Gastrocnemius medialis (tissue), 4 donors: ENCODE measurements at regions of chr5 and their contacts with region 1.

Region 1: DNA sequence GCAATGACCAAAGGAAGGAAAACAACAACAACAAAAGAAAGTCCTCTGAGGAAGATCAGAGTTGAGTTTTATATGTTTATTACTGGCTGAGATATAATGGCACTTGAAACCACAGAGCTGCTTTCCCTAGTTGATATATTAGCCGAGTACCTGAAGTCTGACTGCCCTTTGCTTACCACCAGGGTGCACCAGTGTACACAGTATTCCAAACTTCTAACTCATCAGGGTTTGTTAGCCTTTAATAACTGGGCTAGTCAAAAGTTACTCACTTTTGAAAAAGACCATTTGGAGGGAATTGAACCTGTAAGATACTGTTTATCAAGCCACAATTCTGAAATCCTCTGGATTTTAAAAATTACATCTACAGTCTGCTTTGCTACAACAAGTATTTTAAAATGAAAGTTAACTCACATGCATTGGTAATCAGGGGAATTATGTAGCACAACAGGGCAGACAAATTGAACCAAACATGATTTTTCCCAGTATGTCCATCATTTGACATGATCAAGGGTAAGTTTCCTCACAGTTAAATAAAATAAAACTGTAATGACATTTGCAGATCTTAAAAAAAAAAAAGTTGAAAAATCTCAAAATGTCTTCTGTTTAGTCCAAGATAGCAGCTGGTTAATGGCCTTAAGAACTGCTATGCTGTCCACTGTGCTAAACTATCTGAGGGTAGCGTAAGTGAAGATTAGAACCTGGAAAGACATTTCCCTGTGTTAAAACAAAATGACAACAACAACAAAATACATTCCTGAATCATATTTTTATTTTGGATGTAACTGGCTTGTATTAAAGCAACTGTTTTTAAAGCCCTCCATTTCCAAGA is 57.3 kb upstream of the C6 start:
- DNase-seq: no peak
- ATAC-seq: peak; percentile 62 to 72
- H3K4me3 ChIP-seq: no peak overlapping the region
- H3K27ac ChIP-seq: no peak overlapping the region
- H3K4me1 ChIP-seq: no peaks in the 10 kb centered on the region
- H3K27me3 ChIP-seq: no peaks in the 10 kb centered on the region
- CTCF ChIP-seq: peak; percentile 27 to 59 (median 43)
- POLR2A ChIP-seq: no peak

Region 2: DNA sequence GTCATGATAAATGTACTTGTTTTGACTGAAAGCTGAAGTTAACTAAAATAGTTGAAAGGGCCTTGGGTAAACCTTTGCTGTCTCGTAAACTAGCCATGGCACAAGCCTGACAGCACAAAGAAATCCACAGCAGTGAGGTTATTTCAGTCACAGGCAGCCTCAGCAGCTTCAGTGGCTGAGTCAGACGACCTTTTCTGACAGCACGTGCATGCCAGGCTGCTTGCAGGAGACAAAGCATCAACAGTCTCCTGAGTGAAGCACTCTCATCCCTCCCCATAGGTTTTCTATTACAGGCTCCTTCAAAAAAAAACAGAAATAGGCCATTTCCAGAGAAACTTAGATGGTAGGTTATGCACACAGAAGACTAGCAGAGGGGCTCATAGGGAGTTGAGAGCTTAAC is 565.0 kb after region 1 on chr5:
- in situ Hi-C with region 1: loop called in 2 of 4 experiments (anchors 10 kb)
- intact Hi-C with region 1: no loop called
- DNase-seq: peak; percentile 72 to 81
- ATAC-seq: peak; percentile 99 to 100
- H3K4me3 ChIP-seq: no peak overlapping the region
- H3K27ac ChIP-seq: peak overlapping the region; percentile 70 to 86 (median 74)
- H3K4me1 ChIP-seq: peaks cover 11 to 13% of the 10 kb centered on the region in 2 donors
- H3K27me3 ChIP-seq: no peaks in the 10 kb centered on the region
- CTCF ChIP-seq: no peak
- POLR2A ChIP-seq: peak in 1 of 2 donors; percentile 22

Region 3: GRCh38 chr5:41843456-41844370 is 573.1 kb after region 1 on chr5:
- in situ Hi-C with region 1: loop called in 2 of 4 experiments (anchors 10 kb)
- intact Hi-C with region 1: loop called (anchors 1 kb)
- DNase-seq: no peak
- ATAC-seq: peak in 1 of 2 donors; percentile 60
- H3K4me3 ChIP-seq: no peak overlapping the region
- H3K27ac ChIP-seq: no peak overlapping the region
- H3K4me1 ChIP-seq: no peaks in the 10 kb centered on the region
- H3K27me3 ChIP-seq: no peaks in the 10 kb centered on the region
- CTCF ChIP-seq: peak; percentile 47 to 80 (median 68)
- POLR2A ChIP-seq: no peak